ENCODE measurements at regions of chr4 and their contacts with region 1.

Region 1: GRCh38 chr4:59369228-59369627 is 1830.9 kb upstream of the ADGRL3 start:
- DNase-seq: no peak

Region 2: GRCh38 chr4:58093352-58093751 is 1275.9 kb before region 1 on chr4:
- intact Hi-C with region 1: no loop called
- DNase-seq: no peak

Region 3: DNA sequence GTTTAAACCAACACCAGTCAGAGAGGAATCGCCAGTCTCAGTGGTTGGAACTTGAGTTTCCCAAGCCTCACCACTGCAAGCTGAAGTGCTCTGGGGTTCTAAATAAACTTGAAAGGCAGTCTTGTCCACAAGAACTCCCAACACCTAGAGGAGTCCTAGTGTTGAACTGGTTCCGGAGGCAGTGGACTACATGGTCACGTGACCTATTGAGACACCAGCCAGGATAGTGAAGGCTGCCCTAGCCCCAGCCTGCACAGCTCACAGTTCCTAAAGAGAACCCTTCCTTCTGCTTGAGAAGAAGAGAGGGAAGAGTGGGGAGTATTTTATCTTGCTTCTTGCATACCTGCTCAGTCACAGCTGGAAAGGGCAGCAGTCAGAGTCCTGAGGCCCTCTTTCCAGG is 818.2 kb after region 1 on chr4:
- intact Hi-C with region 1: loop called in 1 of 2 experiments (anchors 5 kb)
- DNase-seq: no peak

Measured in posterior vena cava (tissue), 2 donors.